IMR-90 (cell line): ENCODE measurements at regions of chr13 and their contacts with region 1.

Region 1: DNA sequence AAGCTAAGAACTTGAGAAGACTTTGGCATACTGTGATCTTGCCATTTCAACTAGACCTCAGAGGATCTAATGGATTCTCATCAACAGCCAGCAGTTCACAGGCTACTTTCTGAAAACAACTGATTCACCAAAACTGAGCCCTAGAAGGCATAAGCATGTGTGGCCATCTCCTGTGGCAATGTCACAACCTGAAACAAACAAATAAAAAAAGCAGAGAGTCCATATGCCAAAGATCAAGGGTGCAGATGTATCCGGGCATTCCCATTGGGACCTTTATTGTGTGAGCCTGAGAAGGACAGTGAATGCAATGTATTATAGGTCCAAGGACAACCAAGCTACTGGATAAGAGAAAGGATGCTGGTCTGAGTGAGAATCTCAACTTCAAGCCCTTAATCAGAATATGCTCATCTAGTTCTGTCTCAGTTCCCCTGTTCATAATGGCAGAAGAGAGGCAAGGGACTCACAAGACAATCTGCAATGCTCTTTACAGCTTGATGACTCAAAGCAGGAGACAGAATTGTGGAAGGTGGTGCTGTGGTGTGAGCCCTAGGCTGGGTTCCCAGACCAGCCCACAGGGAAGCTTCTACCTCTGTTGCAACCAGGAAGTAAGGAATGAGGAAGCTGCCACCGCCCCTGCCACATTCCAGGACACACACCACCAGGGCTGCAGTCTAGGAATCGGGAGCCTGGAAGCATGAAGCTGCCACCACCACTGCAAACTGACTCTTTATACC is 133.7 kb downstream of the RAP2A start:
- DNase-seq: peak; percentile 50
- ATAC-seq: peak; percentile 64
- H3K4me3 ChIP-seq: no peak overlapping the region
- H3K27ac ChIP-seq: no peak overlapping the region
- H3K4me1 ChIP-seq: peaks cover 6% of the 10 kb centered on the region; the same call in 1 of the 2 replicates
- H3K27me3 ChIP-seq: no peaks in the 10 kb centered on the region; the same call in 1 of the 2 replicates
- CTCF ChIP-seq: no peak
- POLR2A ChIP-seq: no peak
- RAD21 ChIP-seq: no peak

Region 2: DNA sequence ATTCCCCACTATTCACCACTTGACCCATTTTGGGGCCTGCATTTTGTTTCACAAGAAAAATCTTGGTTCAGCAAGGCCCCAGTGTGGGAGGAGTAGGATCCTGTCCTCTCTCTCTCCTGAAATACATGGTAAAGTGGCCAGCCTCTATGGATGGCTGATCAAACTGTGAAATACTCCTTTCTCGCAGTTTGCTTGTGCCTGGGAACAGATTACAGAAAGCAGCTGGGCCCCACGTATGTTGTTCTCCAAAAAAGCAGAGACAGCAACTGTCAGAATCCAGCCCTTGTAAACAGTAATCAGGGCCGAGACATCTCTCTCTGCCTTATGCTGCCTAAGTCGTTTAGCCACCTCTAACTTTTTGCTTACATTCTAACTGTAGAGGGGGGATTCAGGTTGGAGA is 194.7 kb before region 1 on chr13:
- CTCF ChIA-PET with region 1: no interaction called
- POLR2A ChIA-PET with region 1: no interaction called
- dilution Hi-C with region 1: no loop called
- in situ Hi-C with region 1: loop called (anchors 10 kb)
- intact Hi-C with region 1: no loop called
- DNase-seq: no peak
- ATAC-seq: no peak
- H3K4me3 ChIP-seq: no peak overlapping the region
- H3K27ac ChIP-seq: no peak overlapping the region
- H3K4me1 ChIP-seq: no peaks in the 10 kb centered on the region
- H3K27me3 ChIP-seq: no peaks in the 10 kb centered on the region
- CTCF ChIP-seq: no peak
- POLR2A ChIP-seq: no peak
- RAD21 ChIP-seq: no peak